Adrenal gland (tissue), 19 donors: ENCODE measurements at regions of chr10 and their contacts with region 1.

Region 1: GRCh38 chr10:95693668-95694534 is at the start of gene TCTN3:
- DNase-seq: peak; percentile 96 to 99 (median 99)
- H3K4me3 ChIP-seq: peak within 1 kb of the TSS; percentile 63 to 96 (median 74)
- H3K27ac ChIP-seq: peak within 1 kb of the TSS; percentile 28 to 88 (median 59)
- H3K4me1 ChIP-seq: peaks cover 0 to 25% of the 10 kb centered on the region in 2 donors
- H3K27me3 ChIP-seq: no peaks in the 10 kb centered on the region
- CTCF ChIP-seq: peak; percentile 99 to 100 (median 100)
- POLR2A ChIP-seq: peak; percentile 70 to 85
- total RNA-seq, gene TCTN3: 18.4 to 52.2 (median 43.7) TPM

Region 2: GRCh38 chr10:95841661-95842498 is 148.0 kb after region 1 on chr10:
- intact Hi-C with region 1: loop called (anchors 5 to 10 kb)
- DNase-seq: peak in 6 of 7 donors; percentile 20 to 70 (median 54)
- H3K4me3 ChIP-seq: no peak overlapping the region
- H3K27ac ChIP-seq: peak overlapping the region in 2 of 5 donors; percentile 9 to 27
- H3K4me1 ChIP-seq: peaks cover 0 to 15% of the 10 kb centered on the region in 2 donors
- H3K27me3 ChIP-seq: no peaks in the 10 kb centered on the region
- CTCF ChIP-seq: peak; percentile 35 to 84 (median 75)
- POLR2A ChIP-seq: no peak